ENCODE measurements at regions of chr2 and their contacts with region 1.

Region 1: GRCh38 chr2:138373993-138374408 is 127.6 kb upstream of the SPOPL start:
- DNase-seq: peak; percentile 63
- H3K4me3 Mint-ChIP-seq: no peak overlapping the region
- H3K27ac Mint-ChIP-seq: no peak overlapping the region
- H3K4me1 Mint-ChIP-seq: no peaks in the 10 kb centered on the region
- H3K27me3 Mint-ChIP-seq: no peaks in the 10 kb centered on the region
- CTCF ChIP-seq: peak; percentile 59

Region 2: DNA sequence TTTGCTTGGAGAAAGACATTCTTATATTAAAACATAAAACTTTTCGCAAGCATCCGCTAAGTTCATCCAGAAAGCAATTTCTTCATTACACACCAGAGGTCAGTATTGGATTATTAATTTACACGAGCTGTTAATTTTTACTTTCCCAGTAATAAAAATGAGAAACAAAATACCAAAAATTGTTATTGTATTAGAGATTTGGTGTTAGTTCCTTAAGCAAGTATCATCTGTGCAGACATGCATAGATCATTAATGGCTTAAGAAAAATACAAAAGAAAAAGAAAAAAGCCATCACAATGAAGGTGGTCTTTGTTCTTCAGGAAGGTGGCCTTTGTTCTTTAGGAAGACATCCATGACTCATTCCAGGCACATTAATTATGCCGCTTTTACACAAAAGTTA is 463.4 kb before region 1 on chr2:
- CTCF ChIA-PET with region 1: interaction called, 20 read pairs
- POLR2A ChIA-PET with region 1: interaction called, 3 read pairs
- intact Hi-C with region 1: loop called (anchors 1 kb)
- DNase-seq: peak; percentile 19
- H3K4me3 Mint-ChIP-seq: no peak overlapping the region
- H3K27ac Mint-ChIP-seq: no peak overlapping the region
- H3K4me1 Mint-ChIP-seq: no peaks in the 10 kb centered on the region
- H3K27me3 Mint-ChIP-seq: no peaks in the 10 kb centered on the region
- CTCF ChIP-seq: peak; percentile 63

Region 3: GRCh38 chr2:137947728-137948336 is 426.2 kb before region 1 on chr2:
- CTCF ChIA-PET with region 1: interaction called, 7 read pairs
- POLR2A ChIA-PET with region 1: no interaction called
- intact Hi-C with region 1: loop called (anchors 1 kb)
- DNase-seq: peak; percentile 72
- H3K4me3 Mint-ChIP-seq: no peak overlapping the region
- H3K27ac Mint-ChIP-seq: no peak overlapping the region
- H3K4me1 Mint-ChIP-seq: peaks cover 11% of the 10 kb centered on the region
- H3K27me3 Mint-ChIP-seq: no peaks in the 10 kb centered on the region
- CTCF ChIP-seq: peak; percentile 57

Region 4: GRCh38 chr2:138223316-138223715 is 150.7 kb before region 1 on chr2:
- CTCF ChIA-PET with region 1: no interaction called
- POLR2A ChIA-PET with region 1: no interaction called
- intact Hi-C with region 1: no loop called
- DNase-seq: peak; percentile 46
- H3K4me3 Mint-ChIP-seq: no peak overlapping the region
- H3K27ac Mint-ChIP-seq: no peak overlapping the region
- H3K4me1 Mint-ChIP-seq: peaks cover 11% of the 10 kb centered on the region
- H3K27me3 Mint-ChIP-seq: no peaks in the 10 kb centered on the region
- CTCF ChIP-seq: no peak

Region 5: GRCh38 chr2:138389063-138389462 is 15.1 kb after region 1 on chr2:
- CTCF ChIA-PET with region 1: interaction called, 12 read pairs
- POLR2A ChIA-PET with region 1: interaction called, 4 read pairs
- intact Hi-C with region 1: no loop called
- DNase-seq: no peak
- H3K4me3 Mint-ChIP-seq: no peak overlapping the region
- H3K27ac Mint-ChIP-seq: no peak overlapping the region
- H3K4me1 Mint-ChIP-seq: peaks cover 9% of the 10 kb centered on the region
- H3K27me3 Mint-ChIP-seq: no peaks in the 10 kb centered on the region
- CTCF ChIP-seq: no peak

Measured in MCF 10A (cell line).